Naive thymus-derived CD4-positive, alpha-beta T cell (primary cell): ENCODE measurements at regions of chr12 and their contacts with region 1.

Region 1: GRCh38 chr12:107317751-107318613 is 224.6 kb upstream of the CRY1 start:
- DNase-seq: peak; percentile 67 to 89 (median 85)
- ATAC-seq: peak; percentile 78
- H3K4me3 ChIP-seq: peak overlapping the region; percentile 66
- H3K4me3 Mint-ChIP-seq: peak overlapping the region; percentile 84 to 98 (median 88)
- H3K27ac ChIP-seq: peak overlapping the region; percentile 89
- H3K27ac Mint-ChIP-seq: peak overlapping the region; percentile 34 to 89 (median 62)
- H3K4me1 ChIP-seq: peaks cover 12 to 21% of the 10 kb centered on the region in 2 donors
- H3K4me1 Mint-ChIP-seq: peaks cover 11 to 38% (median 28%) of the 10 kb centered on the region in 7 donors
- H3K27me3 ChIP-seq: no peaks in the 10 kb centered on the region
- H3K27me3 Mint-ChIP-seq: peaks cover 0 to 39% (median 0%) of the 10 kb centered on the region in 5 donors

Region 2: GRCh38 chr12:106302401-106303201 is 1015.4 kb before region 1 on chr12 and contains the start of gene TCP11L2:
- CTCF ChIA-PET with region 1: no interaction called
- POLR2A ChIA-PET with region 1: interaction called, 6 read pairs
- intact Hi-C with region 1: loop called (anchors 2 kb)
- DNase-seq: peak; percentile 91 to 96 (median 94)
- ATAC-seq: peak; percentile 79
- H3K4me3 ChIP-seq: peak within 1 kb of the TSS; percentile 94
- H3K4me3 Mint-ChIP-seq: peak within 1 kb of the TSS; percentile 88 to 99 (median 96)
- H3K27ac ChIP-seq: peak within 1 kb of the TSS; percentile 100
- H3K27ac Mint-ChIP-seq: peak within 1 kb of the TSS; percentile 97 to 100 (median 100)
- H3K4me1 ChIP-seq: peaks cover 15 to 49% of the 10 kb centered on the region in 2 donors
- H3K4me1 Mint-ChIP-seq: peaks cover 45 to 75% (median 55%) of the 10 kb centered on the region in 7 donors
- H3K27me3 ChIP-seq: no peaks in the 10 kb centered on the region
- H3K27me3 Mint-ChIP-seq: peaks cover 0 to 2% (median 0%) of the 10 kb centered on the region in 5 donors
- total RNA-seq, gene TCP11L2: 26.9 to 258 (median 134) TPM

Region 3: GRCh38 chr12:106840243-106840642 is 477.7 kb before region 1 on chr12:
- CTCF ChIA-PET with region 1: no interaction called
- POLR2A ChIA-PET with region 1: no interaction called
- intact Hi-C with region 1: no loop called
- DNase-seq: no peak
- ATAC-seq: no peak
- H3K4me3 ChIP-seq: no peak overlapping the region
- H3K4me3 Mint-ChIP-seq: no peak overlapping the region
- H3K27ac ChIP-seq: peak overlapping the region; percentile 7
- H3K27ac Mint-ChIP-seq: peak overlapping the region in 4 of 9 donors; percentile 7 to 48 (median 26)
- H3K4me1 ChIP-seq: no peaks in the 10 kb centered on the region
- H3K4me1 Mint-ChIP-seq: peaks cover 14 to 32% (median 20%) of the 10 kb centered on the region in 7 donors
- H3K27me3 ChIP-seq: no peaks in the 10 kb centered on the region
- H3K27me3 Mint-ChIP-seq: no peaks in the 10 kb centered on the region

Region 4: DNA sequence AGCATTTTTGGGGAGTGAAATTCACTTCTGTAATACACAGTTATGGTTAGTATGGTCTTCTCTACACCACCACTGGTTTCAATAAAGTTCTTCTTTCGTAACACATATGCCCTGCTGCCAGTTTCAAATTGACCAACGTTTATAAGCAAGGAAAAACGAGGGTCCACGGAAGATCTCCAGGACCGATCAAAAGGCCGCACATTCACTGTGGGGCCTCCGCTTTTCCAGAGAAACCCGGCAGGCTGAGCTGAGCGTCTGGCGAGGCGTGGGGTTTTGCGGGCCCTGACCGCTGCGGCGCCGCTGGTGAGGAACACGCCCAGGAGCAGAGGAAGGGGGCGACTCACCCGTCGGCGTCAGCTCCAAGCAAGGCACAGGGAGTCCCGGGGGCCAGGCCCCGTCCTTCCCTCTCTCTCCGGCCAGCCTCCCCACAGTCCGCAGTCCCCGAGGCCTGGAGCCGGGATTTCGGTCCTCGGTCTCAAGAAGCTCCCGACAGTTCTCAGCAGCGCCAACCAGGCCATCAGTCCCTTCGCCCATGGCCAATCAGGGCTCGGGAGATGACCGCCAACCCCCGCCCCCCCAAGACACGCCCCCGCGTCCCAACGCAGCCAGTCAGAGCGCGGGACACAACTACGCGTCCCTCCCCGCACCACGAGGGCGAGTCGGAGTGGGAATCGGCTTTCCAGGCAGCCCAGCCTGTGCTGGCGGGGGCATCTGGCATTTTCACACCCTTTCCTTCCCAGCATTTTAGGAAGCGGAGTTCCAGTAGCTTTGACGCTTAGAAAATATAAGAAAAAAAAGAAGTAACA is 331.2 kb before region 1 on chr12 and contains the start of gene MTERF2:
- CTCF ChIA-PET with region 1: no interaction called
- POLR2A ChIA-PET with region 1: no interaction called
- intact Hi-C with region 1: loop called in 1 of 2 experiments (anchors 5 kb)
- DNase-seq: peak; percentile 52 to 78 (median 67)
- ATAC-seq: peak; percentile 99
- H3K4me3 ChIP-seq: peak within 1 kb of the TSS; percentile 88
- H3K4me3 Mint-ChIP-seq: peak within 1 kb of the TSS; percentile 91 to 97 (median 96)
- H3K27ac ChIP-seq: peak within 1 kb of the TSS; percentile 77
- H3K27ac Mint-ChIP-seq: peak within 1 kb of the TSS; percentile 79 to 92 (median 85)
- H3K4me1 ChIP-seq: peaks cover 12 to 14% of the 10 kb centered on the region in 2 donors
- H3K4me1 Mint-ChIP-seq: peaks cover 29 to 45% (median 41%) of the 10 kb centered on the region in 7 donors
- H3K27me3 ChIP-seq: no peaks in the 10 kb centered on the region
- H3K27me3 Mint-ChIP-seq: peaks cover 0 to 2% (median 0%) of the 10 kb centered on the region in 5 donors
- total RNA-seq, gene MTERF2: 7.1 to 12.9 (median 9.7) TPM

Region 5: GRCh38 chr12:107328442-107329133 is 10.6 kb after region 1 on chr12:
- CTCF ChIA-PET with region 1: interaction called, 4 read pairs
- POLR2A ChIA-PET with region 1: interaction called, 7 read pairs
- intact Hi-C with region 1: loop called in 1 of 2 experiments (anchors 1 kb)
- DNase-seq: peak in 1 of 9 donors; percentile 26
- ATAC-seq: peak; percentile 71
- H3K4me3 ChIP-seq: no peak overlapping the region
- H3K4me3 Mint-ChIP-seq: peak overlapping the region in 1 of 10 donors; percentile 18
- H3K27ac ChIP-seq: no peak overlapping the region
- H3K27ac Mint-ChIP-seq: peak overlapping the region in 4 of 9 donors; percentile 24 to 66 (median 41)
- H3K4me1 ChIP-seq: peaks cover 3 to 12% of the 10 kb centered on the region in 2 donors
- H3K4me1 Mint-ChIP-seq: peaks cover 45 to 92% (median 82%) of the 10 kb centered on the region in 7 donors
- H3K27me3 ChIP-seq: no peaks in the 10 kb centered on the region
- H3K27me3 Mint-ChIP-seq: no peaks in the 10 kb centered on the region

Region 6: DNA sequence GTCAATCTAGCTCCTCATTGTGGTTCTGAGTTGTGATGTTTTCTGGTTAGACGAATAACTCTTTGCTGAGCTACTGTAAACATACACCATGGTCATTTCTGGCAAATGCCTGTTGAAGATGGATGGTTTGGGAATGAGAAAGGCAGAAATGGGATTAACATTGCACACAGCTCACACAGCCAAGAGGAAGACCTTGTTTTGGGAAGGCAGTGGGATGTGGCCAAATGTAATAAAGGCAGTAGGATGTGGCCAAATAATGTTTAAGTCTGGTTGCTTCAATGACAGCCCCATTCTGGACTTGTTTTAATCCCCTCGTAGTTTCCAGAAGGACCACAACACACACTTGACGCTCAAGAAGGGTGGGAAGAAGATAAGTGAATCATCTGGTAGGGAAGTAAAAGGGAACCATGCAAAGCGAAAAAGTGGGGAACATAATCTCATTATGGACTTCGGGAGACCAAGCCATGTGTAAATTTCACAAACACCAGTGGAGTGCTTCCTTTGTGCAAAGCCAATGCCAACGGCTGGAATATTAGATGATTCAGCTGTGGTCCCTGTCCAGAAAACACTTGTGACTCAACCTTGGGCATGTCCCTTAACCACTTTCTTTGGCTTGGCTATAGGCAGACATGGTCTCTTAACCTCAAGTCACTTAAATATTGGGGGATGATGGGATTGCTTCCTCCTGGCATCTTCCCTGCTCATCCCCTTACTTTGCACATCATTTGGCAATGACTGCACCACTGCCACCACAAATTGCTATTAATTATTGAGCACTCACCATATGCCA is 59.8 kb after region 1 on chr12:
- CTCF ChIA-PET with region 1: interaction called, 7 read pairs
- POLR2A ChIA-PET with region 1: interaction called, 112 read pairs
- intact Hi-C with region 1: loop called in 1 of 2 experiments (anchors 1 kb)
- DNase-seq: no peak
- ATAC-seq: no peak
- H3K4me3 ChIP-seq: no peak overlapping the region
- H3K4me3 Mint-ChIP-seq: no peak overlapping the region
- H3K27ac ChIP-seq: no peak overlapping the region
- H3K27ac Mint-ChIP-seq: peak overlapping the region in 3 of 9 donors; percentile 34 to 52 (median 37)
- H3K4me1 ChIP-seq: peaks cover 17 to 23% of the 10 kb centered on the region in 2 donors
- H3K4me1 Mint-ChIP-seq: peaks cover 37 to 71% (median 58%) of the 10 kb centered on the region in 7 donors
- H3K27me3 ChIP-seq: no peaks in the 10 kb centered on the region
- H3K27me3 Mint-ChIP-seq: no peaks in the 10 kb centered on the region

Region 7: DNA sequence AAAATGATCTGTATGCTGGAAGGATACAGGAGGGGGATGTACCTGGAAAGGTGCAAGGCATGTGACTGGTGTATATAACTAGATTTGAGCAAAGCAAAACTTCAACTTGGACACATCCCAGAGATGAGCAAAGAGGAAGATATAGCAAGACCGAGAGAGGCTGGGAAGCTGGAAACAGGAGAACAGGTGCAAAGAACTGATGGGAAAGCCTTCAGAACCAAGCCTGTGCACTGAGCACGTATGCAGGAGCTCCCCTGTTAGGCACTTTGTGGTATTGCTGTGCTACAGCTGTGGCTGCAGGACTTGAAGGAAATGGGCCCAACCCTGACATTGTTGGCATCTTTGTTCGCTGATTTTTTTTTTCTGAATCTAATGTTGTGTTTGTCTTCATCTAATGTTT is 247.0 kb after region 1 on chr12:
- CTCF ChIA-PET with region 1: no interaction called
- POLR2A ChIA-PET with region 1: no interaction called
- intact Hi-C with region 1: loop called in 1 of 2 experiments (anchors 2 kb)
- DNase-seq: peak in 1 of 9 donors; percentile 12
- ATAC-seq: no peak
- H3K4me3 ChIP-seq: no peak overlapping the region
- H3K4me3 Mint-ChIP-seq: no peak overlapping the region
- H3K27ac ChIP-seq: no peak overlapping the region
- H3K27ac Mint-ChIP-seq: peak overlapping the region in 1 of 9 donors; percentile 88
- H3K4me1 ChIP-seq: no peaks in the 10 kb centered on the region
- H3K4me1 Mint-ChIP-seq: peaks cover 9 to 31% (median 14%) of the 10 kb centered on the region in 7 donors
- H3K27me3 ChIP-seq: no peaks in the 10 kb centered on the region
- H3K27me3 Mint-ChIP-seq: no peaks in the 10 kb centered on the region

Region 8: GRCh38 chr12:107760809-107761501 is 443.0 kb after region 1 on chr12 and contains the start of gene PRDM4:
- CTCF ChIA-PET with region 1: no interaction called
- POLR2A ChIA-PET with region 1: no interaction called
- intact Hi-C with region 1: loop called (anchors 2 to 10 kb)
- DNase-seq: peak; percentile 85 to 96 (median 93)
- ATAC-seq: peak; percentile 99
- H3K4me3 ChIP-seq: peak within 1 kb of the TSS; percentile 83
- H3K4me3 Mint-ChIP-seq: peak within 1 kb of the TSS; percentile 85 to 94 (median 91)
- H3K27ac ChIP-seq: peak within 1 kb of the TSS; percentile 78
- H3K27ac Mint-ChIP-seq: peak within 1 kb of the TSS; percentile 85 to 96 (median 91)
- H3K4me1 ChIP-seq: peaks cover 21% of the 10 kb centered on the region in 2 donors
- H3K4me1 Mint-ChIP-seq: peaks cover 19 to 52% (median 35%) of the 10 kb centered on the region in 7 donors
- H3K27me3 ChIP-seq: no peaks in the 10 kb centered on the region
- H3K27me3 Mint-ChIP-seq: peaks cover 0 to 5% (median 0%) of the 10 kb centered on the region in 5 donors
- total RNA-seq, gene PRDM4: 32.4 to 41.3 (median 36.4) TPM